Activated CD8-positive, alpha-beta memory T cell treated with anti-CD3 and anti-CD28 coated beads, Interleukin-2, amount 10 ng/mL, durations not matched to agents 7 days and 5 days (primary cell): ENCODE measurements at regions of chr2 and their contacts with region 1.

Region 1: DNA sequence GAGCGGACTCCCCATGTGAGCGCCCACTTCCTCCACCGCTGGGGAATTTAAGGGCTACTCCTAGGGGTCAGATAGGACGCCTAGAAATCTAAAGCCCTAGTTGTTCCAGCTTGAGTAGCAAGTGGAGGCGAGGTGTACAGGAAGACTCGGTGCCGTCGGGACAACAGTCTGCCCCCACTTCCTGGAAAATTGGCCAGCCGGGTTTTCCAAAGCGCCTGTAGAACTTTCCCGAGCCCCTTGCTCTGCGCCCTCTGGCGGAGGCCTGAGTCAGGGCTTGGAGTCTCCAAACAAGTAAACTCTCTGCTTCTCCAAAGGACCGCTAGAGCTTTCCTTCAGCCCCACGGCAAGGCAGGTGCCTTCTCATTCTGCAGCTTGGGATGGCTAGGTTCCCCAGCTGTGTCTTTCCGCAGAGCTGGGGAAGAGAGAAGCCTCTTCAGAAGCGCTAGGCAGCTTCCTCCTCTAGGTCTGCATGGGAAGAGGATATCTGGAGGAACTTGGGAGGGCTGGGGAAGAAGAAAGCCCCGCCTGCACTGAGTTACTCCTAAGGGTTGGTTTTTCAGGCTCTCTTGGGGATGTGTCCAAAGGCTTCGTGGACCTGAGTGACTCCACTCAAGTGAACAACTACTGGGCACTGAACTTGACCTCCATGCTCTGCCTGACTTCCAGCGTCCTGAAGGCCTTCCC is 688 bp downstream of the SPR start:
- DNase-seq: peak; percentile 69
- ATAC-seq: peak; percentile 52
- H3K4me3 Mint-ChIP-seq: peak overlapping the region; percentile 50
- H3K27ac Mint-ChIP-seq: no peak overlapping the region
- H3K4me1 Mint-ChIP-seq: peaks cover 6% of the 10 kb centered on the region
- H3K27me3 Mint-ChIP-seq: peaks cover 47% of the 10 kb centered on the region

Region 2: DNA sequence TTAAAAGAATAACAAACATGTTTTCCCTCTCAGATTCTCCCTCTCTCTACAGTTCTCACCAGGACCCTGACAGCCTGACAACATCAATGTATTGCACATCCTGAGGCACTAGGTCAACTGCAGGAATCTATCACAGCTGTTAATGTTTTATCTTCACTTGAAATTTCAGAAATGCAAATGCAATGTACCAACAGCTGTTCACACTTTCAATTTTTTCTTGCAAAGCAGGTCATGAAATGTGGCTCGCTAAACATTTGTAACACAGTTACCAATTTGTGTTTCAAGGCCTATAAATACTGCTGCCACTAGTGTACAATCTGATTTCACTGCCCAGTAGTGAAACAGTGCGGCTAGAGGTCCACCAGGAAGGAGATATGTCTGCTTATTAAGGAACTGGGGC is 209.9 kb before region 1 on chr2:
- CTCF ChIA-PET with region 1: no interaction called
- DNase-seq: no peak
- ATAC-seq: no peak
- H3K4me3 Mint-ChIP-seq: no peak overlapping the region
- H3K27ac Mint-ChIP-seq: no peak overlapping the region
- H3K4me1 Mint-ChIP-seq: no peaks in the 10 kb centered on the region
- H3K27me3 Mint-ChIP-seq: no peaks in the 10 kb centered on the region

Region 3: GRCh38 chr2:72770879-72771461 is 116.9 kb before region 1 on chr2:
- CTCF ChIA-PET with region 1: interaction called, 11 read pairs
- DNase-seq: peak; percentile 71
- ATAC-seq: peak; percentile 64
- H3K4me3 Mint-ChIP-seq: no peak overlapping the region
- H3K27ac Mint-ChIP-seq: no peak overlapping the region
- H3K4me1 Mint-ChIP-seq: no peaks in the 10 kb centered on the region
- H3K27me3 Mint-ChIP-seq: no peaks in the 10 kb centered on the region

Region 4: GRCh38 chr2:72901426-72901825 is 13.5 kb after region 1 on chr2:
- CTCF ChIA-PET with region 1: interaction called, 12 read pairs
- DNase-seq: no peak
- ATAC-seq: no peak
- H3K4me3 Mint-ChIP-seq: no peak overlapping the region
- H3K27ac Mint-ChIP-seq: no peak overlapping the region
- H3K4me1 Mint-ChIP-seq: no peaks in the 10 kb centered on the region
- H3K27me3 Mint-ChIP-seq: peaks cover 69% of the 10 kb centered on the region

Region 5: DNA sequence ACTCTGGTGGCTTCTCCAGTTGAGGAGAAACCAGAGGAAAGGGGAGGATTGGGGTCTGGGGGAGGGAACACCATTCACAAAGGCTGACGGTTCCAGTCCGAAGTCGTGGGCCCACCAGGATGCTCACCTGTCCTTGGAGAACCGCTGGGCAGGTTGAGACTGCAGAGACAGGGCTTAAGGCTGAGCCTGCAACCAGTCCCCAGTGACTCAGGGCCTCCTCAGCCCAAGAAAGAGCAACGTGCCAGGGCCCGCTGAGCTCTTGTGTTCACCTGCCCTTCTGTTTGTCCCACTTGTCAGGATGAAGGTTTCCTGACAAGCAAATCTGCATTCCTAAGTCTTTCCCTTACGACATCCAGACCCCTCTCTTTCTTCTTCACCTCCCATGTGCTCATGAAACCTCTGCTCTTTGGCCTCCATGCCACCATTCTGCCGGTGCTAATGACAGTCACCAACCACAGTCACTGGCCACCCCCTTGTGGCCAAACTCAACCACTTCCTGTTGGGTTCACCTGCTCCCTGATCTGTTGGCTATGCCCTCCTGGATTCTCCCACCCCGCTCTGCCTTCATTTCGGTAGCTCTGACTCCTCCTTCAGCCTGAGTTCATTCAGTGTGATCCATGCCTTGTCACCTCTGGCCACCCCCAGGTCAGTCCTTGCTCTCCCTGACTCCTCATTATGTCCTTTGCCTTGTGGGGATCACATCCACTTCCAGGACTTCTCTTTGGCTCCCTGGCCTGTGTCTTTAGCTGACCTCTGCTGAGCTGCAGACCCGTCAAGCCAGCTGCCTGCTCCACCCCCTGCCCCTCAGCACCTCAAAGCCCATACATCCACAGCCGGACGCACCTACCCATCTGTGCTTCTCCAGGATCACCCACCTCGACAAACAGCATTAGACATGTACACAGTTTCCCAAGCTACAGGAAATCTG is 47.1 kb after region 1 on chr2:
- CTCF ChIA-PET with region 1: interaction called, 24 read pairs
- DNase-seq: no peak
- ATAC-seq: no peak
- H3K4me3 Mint-ChIP-seq: no peak overlapping the region
- H3K27ac Mint-ChIP-seq: no peak overlapping the region
- H3K4me1 Mint-ChIP-seq: peaks cover 16% of the 10 kb centered on the region
- H3K27me3 Mint-ChIP-seq: peaks cover 13% of the 10 kb centered on the region

Region 6: DNA sequence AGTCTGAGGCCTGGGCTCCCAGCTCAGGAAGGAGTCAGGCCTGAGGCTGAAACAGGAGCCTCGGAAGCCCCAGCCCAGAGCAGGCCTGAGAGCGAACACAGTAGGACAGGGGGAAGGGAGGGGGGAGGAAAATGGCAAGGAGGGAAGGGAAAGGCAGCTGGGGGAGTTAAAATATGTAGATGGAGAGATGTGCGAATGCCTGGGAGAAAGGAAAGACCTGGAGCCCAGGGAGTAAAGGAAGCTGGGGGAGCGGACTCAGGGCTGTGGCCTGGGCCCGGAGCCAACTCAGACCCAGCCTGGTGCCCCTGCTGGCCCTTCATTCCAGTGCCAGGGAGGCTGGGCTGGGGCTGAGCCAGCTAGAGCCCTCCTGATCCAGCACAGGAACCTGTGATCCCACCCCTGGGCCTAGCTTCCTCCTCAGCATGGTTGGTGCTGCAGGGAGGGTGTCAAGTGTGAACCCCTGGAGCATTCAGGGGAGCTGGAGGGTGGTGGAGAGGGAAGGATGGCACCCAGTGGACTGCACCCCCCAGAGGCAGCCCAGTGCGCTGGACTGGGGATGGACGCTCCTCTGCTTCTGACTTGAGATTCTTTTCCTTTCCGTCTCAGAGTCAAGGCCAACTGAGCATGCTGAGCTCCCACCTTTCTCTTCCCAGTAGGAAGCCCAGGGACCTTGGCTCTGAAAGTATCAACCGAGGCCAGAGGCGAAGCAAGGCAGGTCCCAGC is 75.7 kb after region 1 on chr2:
- CTCF ChIA-PET with region 1: interaction called, 306 read pairs
- DNase-seq: no peak
- ATAC-seq: no peak
- H3K4me3 Mint-ChIP-seq: no peak overlapping the region
- H3K27ac Mint-ChIP-seq: no peak overlapping the region
- H3K4me1 Mint-ChIP-seq: no peaks in the 10 kb centered on the region
- H3K27me3 Mint-ChIP-seq: no peaks in the 10 kb centered on the region

Region 7: GRCh38 chr2:72993147-72993932 is 105.4 kb after region 1 on chr2:
- CTCF ChIA-PET with region 1: interaction called, 12 read pairs
- DNase-seq: peak; percentile 49
- ATAC-seq: peak; percentile 56
- H3K4me3 Mint-ChIP-seq: no peak overlapping the region
- H3K27ac Mint-ChIP-seq: no peak overlapping the region
- H3K4me1 Mint-ChIP-seq: no peaks in the 10 kb centered on the region
- H3K27me3 Mint-ChIP-seq: no peaks in the 10 kb centered on the region

Region 8: DNA sequence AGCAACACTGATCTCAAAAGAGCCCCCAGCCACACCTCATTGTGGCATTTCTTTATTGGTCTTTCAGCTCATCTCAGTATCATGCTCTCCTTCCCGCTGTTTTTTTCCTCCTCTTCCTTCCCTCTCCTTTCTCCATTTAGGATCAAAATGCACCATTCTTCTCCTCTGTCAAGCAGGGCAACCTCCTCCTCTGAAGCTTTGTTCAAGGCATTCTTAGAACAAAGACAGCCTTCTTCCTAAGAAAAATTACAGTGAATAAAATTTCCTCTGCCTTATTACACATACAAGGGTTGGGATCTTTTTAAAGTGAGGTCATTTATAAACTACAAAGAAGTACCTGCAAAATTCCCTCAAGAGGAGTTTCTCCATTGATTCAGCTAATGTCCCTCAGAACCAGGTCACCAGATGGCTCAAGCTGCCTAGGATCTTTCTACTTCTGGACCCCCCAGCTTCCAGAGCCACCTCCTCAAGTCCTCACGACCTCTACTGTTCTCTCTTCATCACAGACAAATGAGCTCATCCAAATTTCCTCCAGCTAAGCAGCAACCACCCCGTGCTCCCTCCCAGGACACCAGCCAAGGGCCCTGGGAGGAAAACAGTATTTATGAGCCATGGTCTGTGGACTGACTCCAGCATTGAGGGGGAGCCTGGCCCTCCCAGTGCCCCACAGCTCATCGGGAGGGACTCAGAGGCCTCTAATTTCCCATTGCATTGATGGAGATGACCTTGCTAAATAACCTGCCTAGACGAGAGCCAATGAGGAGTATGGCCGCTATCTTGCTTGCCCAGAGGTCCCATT is 165.6 kb after region 1 on chr2:
- CTCF ChIA-PET with region 1: no interaction called
- DNase-seq: no peak
- ATAC-seq: no peak
- H3K4me3 Mint-ChIP-seq: no peak overlapping the region
- H3K27ac Mint-ChIP-seq: no peak overlapping the region
- H3K4me1 Mint-ChIP-seq: no peaks in the 10 kb centered on the region
- H3K27me3 Mint-ChIP-seq: no peaks in the 10 kb centered on the region